GM13976 (cell line): ENCODE measurements at regions of chr6 and their contacts with region 1.

Region 1: DNA sequence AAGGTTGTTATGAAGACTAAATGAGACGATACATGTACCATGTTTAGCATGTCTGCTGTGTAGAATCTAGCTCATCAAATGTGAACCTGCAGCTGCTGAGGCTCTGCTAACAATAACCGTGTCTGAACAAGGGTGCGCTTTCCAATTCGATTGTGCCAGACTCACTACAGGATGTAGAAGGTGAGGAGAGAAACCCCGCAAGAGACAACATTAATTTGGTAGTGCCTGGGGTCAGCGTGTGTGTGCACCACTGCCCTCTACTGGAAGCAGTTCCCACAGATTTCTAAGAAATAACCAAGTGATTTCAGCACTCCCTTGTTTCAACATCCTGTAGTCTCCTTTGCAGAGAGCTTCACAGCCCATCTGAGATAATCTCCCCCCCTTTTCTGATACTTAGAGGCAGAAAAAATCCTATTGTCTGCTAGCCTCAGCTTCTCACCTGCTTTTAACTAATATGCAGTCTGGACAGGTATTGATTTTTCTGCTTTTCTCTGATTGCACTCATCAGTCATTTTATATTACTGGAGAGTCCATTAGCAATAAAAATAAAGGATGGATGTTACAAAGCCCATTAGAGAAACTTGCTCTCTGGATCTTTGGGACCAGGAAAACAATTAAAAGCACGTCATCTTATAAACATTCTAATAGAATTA is 96.7 kb upstream of the BACH2 start:
- DNase-seq: peak; percentile 45
- CTCF ChIP-seq: peak; percentile 62

Region 2: GRCh38 chr6:89940225-89941027 is 452.9 kb before region 1 on chr6:
- in situ Hi-C with region 1: loop called (anchors 10 kb)
- DNase-seq: peak; percentile 74
- CTCF ChIP-seq: peak; percentile 66